ENCODE measurements at regions of chr14 and their contacts with region 1.

Region 1: DNA sequence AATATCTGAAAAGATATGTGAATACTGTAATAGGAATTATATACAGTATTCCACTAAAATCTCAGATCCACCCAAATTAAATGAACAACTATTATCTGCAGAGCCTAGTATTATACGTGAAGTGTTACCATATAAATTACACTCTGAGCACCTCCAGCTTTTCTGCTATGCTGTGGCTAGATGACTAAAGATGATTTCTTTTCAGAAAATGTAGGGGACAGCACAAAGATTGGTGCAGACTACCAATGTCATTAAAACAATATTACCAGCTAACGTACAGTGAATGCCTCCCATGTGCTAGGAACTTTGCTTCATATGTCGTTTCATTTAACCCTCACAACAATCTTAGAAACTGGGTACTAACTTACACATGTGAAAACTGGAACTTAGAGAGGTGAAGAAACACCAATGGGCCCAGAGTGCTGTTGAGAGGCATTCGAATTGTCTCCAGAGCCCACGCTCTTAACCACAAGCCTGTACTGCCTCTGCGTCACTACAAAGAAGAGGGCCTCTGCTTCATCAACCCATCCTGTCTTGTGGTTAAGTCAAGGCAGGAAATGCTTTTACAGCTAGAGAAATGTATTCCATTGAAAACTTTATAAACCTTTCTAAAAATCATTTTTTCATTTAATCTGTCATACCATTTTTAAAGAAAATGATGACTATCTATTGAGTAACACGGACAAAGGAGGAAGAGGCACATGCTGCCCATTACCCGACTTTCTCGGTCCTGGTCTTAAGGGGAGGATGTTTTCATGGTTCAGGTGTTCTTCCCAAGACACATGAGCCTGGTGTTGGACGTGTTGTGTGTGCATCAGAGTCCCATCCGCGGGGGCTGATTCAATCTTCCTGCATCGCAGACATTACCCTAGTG is 1.3 kb downstream of the GPR65 start:
- DNase-seq: peak; percentile 64
- H3K4me3 Mint-ChIP-seq: peak overlapping the region; percentile 94
- H3K27ac Mint-ChIP-seq: peak overlapping the region; percentile 97
- H3K4me1 Mint-ChIP-seq: peaks cover 62% of the 10 kb centered on the region
- H3K27me3 Mint-ChIP-seq: no peaks in the 10 kb centered on the region

Region 2: GRCh38 chr14:87971010-87971409 is 35.2 kb before region 1 on chr14:
- intact Hi-C with region 1: no loop called
- DNase-seq: no peak
- H3K4me3 Mint-ChIP-seq: no peak overlapping the region
- H3K27ac Mint-ChIP-seq: no peak overlapping the region
- H3K4me1 Mint-ChIP-seq: peaks cover 8% of the 10 kb centered on the region
- H3K27me3 Mint-ChIP-seq: no peaks in the 10 kb centered on the region

Region 3: DNA sequence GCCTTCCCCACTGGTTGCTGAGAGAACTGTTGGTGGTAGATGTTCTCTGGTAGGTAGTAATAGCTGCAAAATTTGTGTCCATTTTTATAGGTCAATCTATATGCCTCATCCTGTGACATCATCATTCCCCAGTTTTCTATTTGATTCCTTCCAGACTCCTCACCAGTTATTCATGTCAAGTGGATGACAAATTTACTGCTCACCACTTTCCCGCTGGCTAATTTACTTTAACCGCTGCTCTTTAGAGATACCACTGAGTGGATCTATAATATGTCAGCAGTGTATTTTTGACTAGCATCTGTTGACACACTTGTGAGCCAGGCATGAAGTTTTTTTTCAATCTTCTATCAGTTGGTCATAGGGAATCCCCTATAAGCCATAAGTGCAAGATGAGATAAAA is 23.3 kb after region 1 on chr14:
- intact Hi-C with region 1: loop called (anchors 1 kb)
- DNase-seq: no peak
- H3K4me3 Mint-ChIP-seq: peak overlapping the region; percentile 2
- H3K27ac Mint-ChIP-seq: peak overlapping the region; percentile 72
- H3K4me1 Mint-ChIP-seq: peaks cover 52% of the 10 kb centered on the region
- H3K27me3 Mint-ChIP-seq: no peaks in the 10 kb centered on the region

Region 4: DNA sequence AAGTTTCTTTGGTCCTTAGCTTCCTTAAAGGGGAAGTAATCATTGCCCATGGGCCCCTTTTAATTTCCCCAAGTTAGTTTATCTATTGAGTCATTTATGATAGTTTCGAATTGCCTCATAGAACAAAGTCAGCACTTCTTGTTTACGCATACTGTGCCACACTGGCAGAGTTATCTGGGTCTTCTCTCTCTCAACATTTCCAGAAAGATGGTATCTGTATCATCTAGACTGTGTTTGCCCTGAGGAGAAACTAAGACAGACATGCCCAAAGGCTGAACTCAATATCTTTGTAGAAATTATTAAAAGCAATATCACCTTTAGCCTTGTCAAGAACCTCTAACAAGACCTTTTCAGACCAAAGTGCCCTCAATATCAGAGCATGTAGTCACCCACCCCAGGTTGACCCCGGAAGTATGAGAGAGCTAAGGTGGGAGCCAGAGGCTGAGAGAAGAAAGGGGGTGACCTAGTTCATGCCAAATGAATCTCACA is 38.7 kb after region 1 on chr14:
- intact Hi-C with region 1: loop called (anchors 2 kb)
- DNase-seq: no peak
- H3K4me3 Mint-ChIP-seq: no peak overlapping the region
- H3K27ac Mint-ChIP-seq: peak overlapping the region; percentile 73
- H3K4me1 Mint-ChIP-seq: peaks cover 17% of the 10 kb centered on the region
- H3K27me3 Mint-ChIP-seq: no peaks in the 10 kb centered on the region

Region 5: DNA sequence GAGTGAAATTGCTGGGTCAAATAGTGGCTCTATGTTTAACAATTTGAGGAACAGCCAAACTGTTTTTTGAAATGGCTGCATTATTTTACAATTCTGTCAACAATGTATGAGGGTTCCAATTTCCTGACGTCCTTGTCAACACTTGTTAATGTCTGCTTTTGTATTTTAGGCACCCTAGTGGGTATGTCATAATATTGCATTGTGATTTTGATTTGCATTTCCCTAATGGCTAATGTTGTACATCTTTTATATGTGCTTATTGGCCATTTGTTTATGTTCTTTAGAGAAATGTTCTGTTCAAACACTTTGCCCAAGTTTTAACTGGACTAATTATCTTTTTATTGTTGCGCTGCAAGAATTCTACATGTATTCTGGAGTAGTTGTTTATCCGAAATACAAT is 91.9 kb after region 1 on chr14:
- intact Hi-C with region 1: no loop called
- DNase-seq: no peak
- H3K4me3 Mint-ChIP-seq: no peak overlapping the region
- H3K27ac Mint-ChIP-seq: no peak overlapping the region
- H3K4me1 Mint-ChIP-seq: no peaks in the 10 kb centered on the region
- H3K27me3 Mint-ChIP-seq: peaks cover 8% of the 10 kb centered on the region

Region 6: DNA sequence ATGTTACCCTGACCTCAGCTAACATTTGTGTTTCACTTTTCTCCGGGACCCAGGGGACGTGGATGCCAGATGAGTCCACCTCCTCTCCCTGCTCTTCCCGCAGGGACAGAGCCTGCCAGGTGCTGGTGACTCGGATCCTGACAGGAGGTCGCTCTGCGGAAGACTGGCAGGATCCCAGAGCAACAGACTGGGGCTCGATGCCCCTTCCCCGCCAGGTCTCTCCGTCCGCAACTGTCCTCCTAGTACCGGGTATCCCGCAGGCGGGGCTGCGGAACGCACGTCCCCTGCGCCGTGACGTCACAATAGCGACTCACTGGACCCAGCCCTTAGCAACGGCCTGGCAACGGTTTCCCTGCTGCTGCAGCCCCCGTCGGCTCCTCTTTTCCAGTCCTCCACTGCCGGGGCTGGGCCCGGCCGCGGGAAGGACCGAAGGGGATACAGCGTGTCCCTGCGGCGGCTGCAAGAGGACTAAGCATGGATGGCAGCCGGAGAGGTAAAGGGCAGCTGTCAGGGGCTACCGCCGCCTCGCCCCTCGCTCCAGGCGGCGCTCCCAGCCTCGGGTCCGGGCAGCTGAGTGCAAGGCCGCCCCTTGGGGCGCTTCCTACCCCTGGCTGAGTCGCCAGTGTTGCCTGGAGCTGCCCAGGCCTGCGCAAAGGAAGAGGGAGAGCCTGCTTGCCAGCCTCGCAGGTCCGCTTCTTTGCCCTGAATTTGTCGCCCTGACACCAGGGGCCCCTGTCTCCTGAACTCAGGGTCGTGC is 379.3 kb after region 1 on chr14 and contains the start of gene SPATA7:
- intact Hi-C with region 1: loop called (anchors 10 kb)
- DNase-seq: peak; percentile 79
- H3K4me3 Mint-ChIP-seq: peak within 1 kb of the TSS; percentile 96
- H3K27ac Mint-ChIP-seq: peak within 1 kb of the TSS; percentile 72
- H3K4me1 Mint-ChIP-seq: peaks cover 19% of the 10 kb centered on the region
- H3K27me3 Mint-ChIP-seq: peaks cover 21% of the 10 kb centered on the region
- total RNA-seq, gene SPATA7: 2.3 and 3.1 TPM in 2 replicates

Region 7: DNA sequence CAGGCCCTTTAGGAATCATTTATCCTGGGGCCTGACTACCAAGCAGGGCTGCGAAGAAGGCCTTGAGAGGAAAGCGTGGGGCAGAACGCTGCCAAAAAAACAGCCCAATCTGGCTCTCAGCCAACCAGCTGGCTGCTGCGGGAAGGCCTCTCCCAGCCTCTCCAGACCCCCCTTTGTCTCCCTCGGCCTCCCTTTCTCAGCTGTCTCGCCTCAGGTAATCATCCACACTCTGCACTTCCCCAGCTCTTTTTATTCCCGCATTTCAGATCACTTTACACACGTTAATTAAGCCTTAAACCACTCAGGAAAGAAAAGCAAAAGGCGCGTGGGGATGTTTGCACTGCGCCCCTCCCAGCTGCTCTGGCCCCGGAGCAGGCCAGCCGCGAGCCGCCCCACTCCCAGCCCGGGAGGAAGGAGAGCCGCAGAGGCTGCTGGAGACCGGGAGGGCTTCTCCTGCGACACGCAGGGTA is 1619.1 kb after region 1 on chr14:
- intact Hi-C with region 1: loop called (anchors 10 kb)
- DNase-seq: no peak
- H3K4me3 Mint-ChIP-seq: no peak overlapping the region
- H3K27ac Mint-ChIP-seq: peak overlapping the region; percentile 93
- H3K4me1 Mint-ChIP-seq: peaks cover 65% of the 10 kb centered on the region
- H3K27me3 Mint-ChIP-seq: no peaks in the 10 kb centered on the region